Natural killer cell (primary cell): ENCODE measurements at regions of chr3 and their contacts with region 1.

Region 1: DNA sequence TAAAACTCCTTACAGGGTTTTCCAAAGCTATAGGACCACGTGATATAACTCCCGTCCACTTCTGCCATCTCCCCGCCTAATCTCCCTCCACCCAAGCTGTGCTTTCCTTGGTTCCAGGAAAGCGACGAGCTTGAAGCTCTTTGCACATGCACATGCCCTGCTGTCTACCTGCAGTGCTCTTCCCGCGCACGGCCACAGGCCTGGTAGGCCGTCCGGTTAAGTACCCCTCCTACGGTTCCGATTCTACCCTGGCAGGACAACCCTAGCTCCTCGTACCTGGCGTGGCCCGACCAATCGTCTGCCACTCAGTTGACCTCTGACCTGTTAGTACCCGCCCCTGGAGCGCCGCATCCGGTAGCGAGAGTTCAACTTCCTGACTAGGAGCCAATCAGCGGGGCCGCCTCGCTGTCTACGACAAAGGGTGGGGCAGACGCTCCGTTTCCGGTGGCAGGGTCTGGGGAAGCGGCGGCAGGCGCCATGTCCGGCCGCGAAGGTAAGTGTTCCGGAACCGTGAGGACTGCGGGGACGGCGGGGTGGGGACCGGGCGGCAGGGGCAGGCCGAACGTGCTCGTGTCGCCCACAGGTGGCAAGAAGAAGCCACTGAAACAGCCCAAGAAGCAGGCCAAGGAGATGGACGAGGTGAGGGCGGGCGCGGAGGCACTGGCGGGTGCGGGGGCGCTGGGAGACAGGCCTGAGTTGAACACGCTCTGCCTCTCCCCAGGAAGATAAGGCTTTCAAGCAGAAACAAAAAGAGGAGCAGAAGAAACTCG is at the starts of genes CCDC51 and TMA7:
- DNase-seq: peak; percentile 96 to 98
- ATAC-seq: peak; percentile 95 to 99 (median 96)
- H3K4me3 ChIP-seq: peak within 1 kb of the TSS; percentile 82
- H3K4me3 Mint-ChIP-seq: peak within 1 kb of the TSS; percentile 97
- H3K27ac ChIP-seq: peak within 1 kb of the TSS; percentile 91
- H3K27ac Mint-ChIP-seq: peak within 1 kb of the TSS in 1 of 2 donors; percentile 96
- H3K4me1 ChIP-seq: peaks cover 34% of the 10 kb centered on the region
- H3K4me1 Mint-ChIP-seq: peaks cover 29 to 32% of the 10 kb centered on the region in 2 donors
- H3K27me3 ChIP-seq: no peaks in the 10 kb centered on the region
- H3K27me3 Mint-ChIP-seq: no peaks in the 10 kb centered on the region
- CTCF ChIP-seq: no peak
- total RNA-seq, gene CCDC51: 4.4 to 8.8 (median 6.8) TPM
- total RNA-seq, gene TMA7: 192 to 239 (median 229) TPM

Region 2: GRCh38 chr3:48232734-48233133 is 207.3 kb before region 1 on chr3:
- intact Hi-C with region 1: loop called (anchors 1 kb)
- DNase-seq: peak; percentile 24 to 71
- ATAC-seq: peak; percentile 73 to 85 (median 85)
- H3K4me3 ChIP-seq: no peak overlapping the region
- H3K4me3 Mint-ChIP-seq: no peak overlapping the region
- H3K27ac ChIP-seq: no peak overlapping the region
- H3K27ac Mint-ChIP-seq: no peak overlapping the region
- H3K4me1 ChIP-seq: peaks cover 10% of the 10 kb centered on the region
- H3K4me1 Mint-ChIP-seq: peaks cover 0 to 7% of the 10 kb centered on the region in 2 donors
- H3K27me3 ChIP-seq: no peaks in the 10 kb centered on the region
- H3K27me3 Mint-ChIP-seq: peaks cover 0 to 7% of the 10 kb centered on the region in 2 donors
- CTCF ChIP-seq: no peak

Region 3: GRCh38 chr3:48273594-48274211 is 166.3 kb before region 1 on chr3:
- intact Hi-C with region 1: loop called (anchors 1 kb)
- DNase-seq: peak; percentile 30 to 82
- ATAC-seq: peak; percentile 68 to 78 (median 70)
- H3K4me3 ChIP-seq: no peak overlapping the region
- H3K4me3 Mint-ChIP-seq: no peak overlapping the region
- H3K27ac ChIP-seq: no peak overlapping the region
- H3K27ac Mint-ChIP-seq: no peak overlapping the region
- H3K4me1 ChIP-seq: no peaks in the 10 kb centered on the region
- H3K4me1 Mint-ChIP-seq: peaks cover 0 to 5% of the 10 kb centered on the region in 2 donors
- H3K27me3 ChIP-seq: no peaks in the 10 kb centered on the region
- H3K27me3 Mint-ChIP-seq: no peaks in the 10 kb centered on the region
- CTCF ChIP-seq: peak; percentile 74

Region 4: GRCh38 chr3:48367201-48367600 is 72.8 kb before region 1 on chr3:
- intact Hi-C with region 1: no loop called
- DNase-seq: no peak
- ATAC-seq: no peak
- H3K4me3 ChIP-seq: no peak overlapping the region
- H3K4me3 Mint-ChIP-seq: no peak overlapping the region
- H3K27ac ChIP-seq: no peak overlapping the region
- H3K27ac Mint-ChIP-seq: no peak overlapping the region
- H3K4me1 ChIP-seq: no peaks in the 10 kb centered on the region
- H3K4me1 Mint-ChIP-seq: no peaks in the 10 kb centered on the region
- H3K27me3 ChIP-seq: peaks cover 1% of the 10 kb centered on the region
- H3K27me3 Mint-ChIP-seq: peaks cover 3 to 5% of the 10 kb centered on the region in 2 donors
- CTCF ChIP-seq: no peak

Region 5: DNA sequence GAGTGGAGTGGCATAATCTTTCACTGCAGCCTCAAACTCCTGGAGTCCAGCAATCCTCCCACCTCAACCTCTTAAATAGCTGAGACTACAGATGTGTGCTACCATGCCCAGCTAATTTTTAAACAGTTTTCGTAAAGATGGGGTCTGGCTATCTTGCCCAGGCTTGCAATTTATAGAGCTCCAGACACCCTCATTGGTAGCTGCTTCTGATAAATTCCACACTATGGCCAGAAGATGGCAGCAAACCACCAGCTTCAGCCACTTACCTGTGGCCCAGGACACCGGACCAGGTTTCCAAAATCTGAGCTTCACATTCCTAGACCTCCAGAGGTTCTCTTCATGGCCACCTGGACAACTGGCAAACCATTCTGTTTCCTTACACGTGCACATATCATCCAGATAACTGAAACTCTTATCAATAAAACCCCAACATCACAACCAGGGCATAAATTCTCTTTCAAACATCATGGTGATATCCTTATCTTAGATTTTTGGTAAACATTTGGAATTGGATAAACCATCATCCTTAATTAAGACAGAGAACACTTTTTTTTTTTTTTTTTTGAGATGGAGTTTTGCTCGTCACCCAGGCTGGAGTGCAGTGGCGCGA is 39.1 kb before region 1 on chr3:
- intact Hi-C with region 1: loop called (anchors 1 kb)
- DNase-seq: peak; percentile 53 to 91
- ATAC-seq: peak; percentile 74 to 94 (median 93)
- H3K4me3 ChIP-seq: no peak overlapping the region
- H3K4me3 Mint-ChIP-seq: no peak overlapping the region
- H3K27ac ChIP-seq: no peak overlapping the region
- H3K27ac Mint-ChIP-seq: no peak overlapping the region
- H3K4me1 ChIP-seq: no peaks in the 10 kb centered on the region
- H3K4me1 Mint-ChIP-seq: no peaks in the 10 kb centered on the region
- H3K27me3 ChIP-seq: no peaks in the 10 kb centered on the region
- H3K27me3 Mint-ChIP-seq: peaks cover 5 to 6% of the 10 kb centered on the region in 2 donors
- CTCF ChIP-seq: peak; percentile 89

Region 6: GRCh38 chr3:48472915-48473616 is 33.1 kb after region 1 on chr3:
- intact Hi-C with region 1: loop called (anchors 1 kb)
- DNase-seq: peak; percentile 83 to 99
- ATAC-seq: peak; percentile 86 to 93 (median 91)
- H3K4me3 ChIP-seq: peak overlapping the region; percentile 47
- H3K4me3 Mint-ChIP-seq: peak overlapping the region; percentile 94
- H3K27ac ChIP-seq: peak overlapping the region; percentile 88
- H3K27ac Mint-ChIP-seq: peak overlapping the region; percentile 95 to 97
- H3K4me1 ChIP-seq: peaks cover 66% of the 10 kb centered on the region
- H3K4me1 Mint-ChIP-seq: peaks cover 41 to 53% of the 10 kb centered on the region in 2 donors
- H3K27me3 ChIP-seq: no peaks in the 10 kb centered on the region
- H3K27me3 Mint-ChIP-seq: no peaks in the 10 kb centered on the region
- CTCF ChIP-seq: peak; percentile 36

Region 7: GRCh38 chr3:48478596-48479555 is 38.9 kb after region 1 on chr3:
- intact Hi-C with region 1: loop called (anchors 1 kb)
- DNase-seq: peak; percentile 64 to 81
- ATAC-seq: peak; percentile 72 to 87 (median 81)
- H3K4me3 ChIP-seq: peak overlapping the region; percentile 24
- H3K4me3 Mint-ChIP-seq: peak overlapping the region; percentile 81
- H3K27ac ChIP-seq: peak overlapping the region; percentile 86
- H3K27ac Mint-ChIP-seq: peak overlapping the region; percentile 96 to 97
- H3K4me1 ChIP-seq: peaks cover 33% of the 10 kb centered on the region
- H3K4me1 Mint-ChIP-seq: peaks cover 35 to 37% of the 10 kb centered on the region in 2 donors
- H3K27me3 ChIP-seq: no peaks in the 10 kb centered on the region
- H3K27me3 Mint-ChIP-seq: no peaks in the 10 kb centered on the region
- CTCF ChIP-seq: no peak

Region 8: GRCh38 chr3:48507351-48508061 is 67.5 kb after region 1 on chr3:
- intact Hi-C with region 1: loop called (anchors 1 kb)
- DNase-seq: peak; percentile 56 to 88
- ATAC-seq: peak; percentile 82 to 85 (median 84)
- H3K4me3 ChIP-seq: no peak overlapping the region
- H3K4me3 Mint-ChIP-seq: peak overlapping the region; percentile 35
- H3K27ac ChIP-seq: no peak overlapping the region
- H3K27ac Mint-ChIP-seq: peak overlapping the region in 1 of 2 donors; percentile 57
- H3K4me1 ChIP-seq: peaks cover 31% of the 10 kb centered on the region
- H3K4me1 Mint-ChIP-seq: peaks cover 8 to 23% of the 10 kb centered on the region in 2 donors
- H3K27me3 ChIP-seq: no peaks in the 10 kb centered on the region
- H3K27me3 Mint-ChIP-seq: no peaks in the 10 kb centered on the region
- CTCF ChIP-seq: peak; percentile 50

Region 9: DNA sequence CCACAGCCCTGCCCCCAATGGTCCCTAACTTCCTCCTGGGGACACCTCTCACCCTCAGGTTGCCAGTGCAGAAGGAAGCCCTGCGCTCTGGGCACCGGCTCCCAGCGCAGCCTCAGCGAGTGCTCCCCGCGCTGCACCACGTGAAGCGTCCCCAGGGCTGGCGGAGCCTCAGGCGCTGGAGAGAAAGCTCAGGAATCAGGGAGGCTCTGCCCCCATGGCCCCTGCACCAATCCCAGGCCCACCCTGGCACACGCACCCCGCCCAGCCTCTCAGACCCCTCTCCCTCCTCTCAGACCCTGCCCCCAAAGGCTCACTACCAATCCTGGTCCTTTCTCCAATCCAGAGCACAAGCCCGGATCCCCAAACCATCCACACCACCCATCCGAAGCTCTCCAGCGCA is 148.2 kb after region 1 on chr3:
- intact Hi-C with region 1: no loop called
- DNase-seq: no peak
- ATAC-seq: no peak
- H3K4me3 ChIP-seq: no peak overlapping the region
- H3K4me3 Mint-ChIP-seq: no peak overlapping the region
- H3K27ac ChIP-seq: no peak overlapping the region
- H3K27ac Mint-ChIP-seq: no peak overlapping the region
- H3K4me1 ChIP-seq: no peaks in the 10 kb centered on the region
- H3K4me1 Mint-ChIP-seq: no peaks in the 10 kb centered on the region
- H3K27me3 ChIP-seq: no peaks in the 10 kb centered on the region
- H3K27me3 Mint-ChIP-seq: peaks cover 18% of the 10 kb centered on the region in 2 donors
- CTCF ChIP-seq: no peak

Region 10: GRCh38 chr3:48609088-48610005 is 169.3 kb after region 1 on chr3 and contains the start of gene UQCRC1:
- intact Hi-C with region 1: no loop called
- DNase-seq: peak; percentile 93 to 97
- ATAC-seq: peak; percentile 98 to 100 (median 99)
- H3K4me3 ChIP-seq: peak within 1 kb of the TSS; percentile 99
- H3K4me3 Mint-ChIP-seq: peak within 1 kb of the TSS; percentile 99
- H3K27ac ChIP-seq: peak within 1 kb of the TSS; percentile 81
- H3K27ac Mint-ChIP-seq: peak within 1 kb of the TSS; percentile 90 to 98
- H3K4me1 ChIP-seq: peaks cover 14% of the 10 kb centered on the region
- H3K4me1 Mint-ChIP-seq: peaks cover 6 to 21% of the 10 kb centered on the region in 2 donors
- H3K27me3 ChIP-seq: no peaks in the 10 kb centered on the region
- H3K27me3 Mint-ChIP-seq: no peaks in the 10 kb centered on the region
- CTCF ChIP-seq: peak; percentile 76
- total RNA-seq, gene UQCRC1: 117 to 139 (median 124) TPM

Region 11: DNA sequence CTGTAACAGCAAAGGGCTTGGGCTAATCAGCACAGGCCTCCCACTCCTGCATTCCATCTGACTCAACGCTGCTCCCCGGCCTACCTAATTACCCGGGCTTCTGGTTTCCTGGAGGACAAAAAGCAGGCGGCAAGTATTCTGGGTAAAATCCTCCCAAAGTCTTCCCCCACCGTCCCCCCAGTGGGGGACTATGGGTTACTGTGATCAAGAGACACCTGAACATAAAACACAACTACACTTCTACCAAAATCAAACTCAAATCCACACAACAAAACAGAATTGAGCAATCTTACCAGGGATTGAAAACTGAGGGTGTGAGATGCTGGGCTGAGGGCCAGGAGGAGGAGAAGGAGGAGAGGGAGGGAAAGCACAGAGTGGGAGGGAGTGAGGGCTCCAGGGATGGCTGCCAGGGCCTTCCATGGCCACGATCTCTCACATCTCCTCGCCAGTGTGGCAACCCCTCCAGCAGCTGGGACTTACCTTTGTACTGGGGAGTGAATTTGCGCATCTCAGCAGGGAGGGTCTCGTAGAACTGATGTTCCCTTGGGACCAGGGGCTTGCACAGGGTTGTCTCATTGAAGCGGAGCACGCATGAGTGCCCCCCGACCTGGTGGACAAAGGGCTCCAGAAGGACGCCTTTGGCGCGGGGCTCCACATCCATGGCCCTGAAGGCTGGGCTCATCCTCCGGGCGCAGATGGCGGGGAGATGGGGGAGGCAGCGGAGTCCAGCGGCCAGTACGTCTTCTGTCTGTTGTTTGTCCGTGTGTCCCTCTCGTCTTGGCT is 254.8 kb after region 1 on chr3:
- intact Hi-C with region 1: no loop called
- DNase-seq: no peak
- ATAC-seq: no peak
- H3K4me3 ChIP-seq: no peak overlapping the region
- H3K4me3 Mint-ChIP-seq: no peak overlapping the region
- H3K27ac ChIP-seq: no peak overlapping the region
- H3K27ac Mint-ChIP-seq: peak overlapping the region in 1 of 2 donors; percentile 35
- H3K4me1 ChIP-seq: no peaks in the 10 kb centered on the region
- H3K4me1 Mint-ChIP-seq: peaks cover 6 to 21% of the 10 kb centered on the region in 2 donors
- H3K27me3 ChIP-seq: no peaks in the 10 kb centered on the region
- H3K27me3 Mint-ChIP-seq: no peaks in the 10 kb centered on the region
- CTCF ChIP-seq: no peak